Activated naive CD4-positive, alpha-beta T cell treated with anti-CD3 and anti-CD28 coated beads for 36 hours (primary cell): ENCODE measurements at regions of chr7 and their contacts with region 1.

Region 1: DNA sequence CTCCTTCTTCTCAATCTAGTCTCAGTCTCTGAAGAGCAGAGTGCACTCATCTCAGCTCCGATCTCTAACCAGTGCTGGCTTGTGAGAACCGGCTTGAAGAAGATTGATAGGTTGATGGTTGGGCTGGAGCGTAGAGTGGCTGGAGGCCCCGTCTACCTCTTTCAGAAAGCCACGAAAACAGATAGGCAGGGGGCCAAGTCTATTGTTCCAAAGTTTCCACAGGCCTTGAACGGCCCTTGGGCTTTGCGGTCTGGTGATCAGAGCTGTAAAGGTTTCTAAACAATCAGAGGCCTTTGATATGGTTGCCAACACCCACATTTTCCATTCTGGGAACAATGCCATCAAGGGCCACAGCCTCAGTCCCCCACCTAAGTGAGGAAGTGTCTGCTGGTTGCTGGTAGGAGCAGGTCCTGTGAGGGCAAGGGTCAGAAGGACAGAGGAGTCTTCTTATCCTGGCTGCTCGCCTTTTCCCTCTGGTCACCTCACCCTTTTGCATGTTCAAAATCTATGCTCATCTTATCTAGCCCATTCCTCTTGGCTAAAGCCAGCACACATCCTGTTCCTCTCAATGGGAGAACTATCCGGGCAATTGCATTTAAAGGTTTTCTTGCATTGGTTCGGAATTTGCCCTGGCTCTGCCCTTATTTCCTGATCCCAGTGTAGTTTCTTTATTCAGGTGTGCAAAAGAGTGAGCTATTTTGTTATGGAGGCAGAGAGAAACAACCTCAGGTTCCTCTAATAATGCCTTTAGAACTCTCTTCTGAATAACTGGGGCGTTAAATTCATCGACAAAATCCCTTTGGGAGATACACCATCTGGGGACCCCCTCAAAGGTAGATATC is 70.3 kb upstream of the KMT2E start:
- DNase-seq: peak; percentile 82
- H3K4me3 Mint-ChIP-seq: peak overlapping the region; percentile 97
- H3K27ac Mint-ChIP-seq: peak overlapping the region; percentile 100
- H3K4me1 Mint-ChIP-seq: peaks cover 59% of the 10 kb centered on the region
- H3K27me3 Mint-ChIP-seq: no peaks in the 10 kb centered on the region

Region 2: DNA sequence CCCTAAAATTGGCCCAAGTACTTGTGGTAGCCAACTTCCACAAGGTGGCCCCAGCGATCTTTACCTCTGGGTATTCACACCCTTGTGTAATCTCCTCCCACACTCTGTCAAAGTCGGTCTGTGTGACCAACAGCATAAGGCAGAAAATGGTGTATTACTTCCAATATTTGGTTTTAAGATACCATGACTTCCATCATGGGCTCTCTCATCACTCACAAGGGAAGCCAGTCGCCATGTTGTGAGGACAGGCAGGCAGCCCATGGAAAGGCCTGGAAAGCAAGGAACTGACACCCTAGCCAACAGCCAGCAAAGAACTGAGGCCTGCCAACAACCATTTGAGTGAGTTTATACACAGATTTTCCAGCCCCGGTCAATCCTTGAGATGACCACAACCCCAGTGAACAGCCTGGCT is 20.7 kb before region 1 on chr7:
- CTCF ChIA-PET with region 1: interaction called, 7 read pairs
- intact Hi-C with region 1: loop called (anchors 1 kb)
- DNase-seq: peak; percentile 90
- H3K4me3 Mint-ChIP-seq: no peak overlapping the region
- H3K27ac Mint-ChIP-seq: peak overlapping the region; percentile 61
- H3K4me1 Mint-ChIP-seq: peaks cover 4% of the 10 kb centered on the region
- H3K27me3 Mint-ChIP-seq: no peaks in the 10 kb centered on the region

Region 3: GRCh38 chr7:105098863-105099515 is 155.3 kb after region 1 on chr7:
- CTCF ChIA-PET with region 1: no interaction called
- intact Hi-C with region 1: loop called (anchors 1 kb)
- DNase-seq: no peak
- H3K4me3 Mint-ChIP-seq: no peak overlapping the region
- H3K27ac Mint-ChIP-seq: peak overlapping the region; percentile 73
- H3K4me1 Mint-ChIP-seq: peaks cover 59% of the 10 kb centered on the region
- H3K27me3 Mint-ChIP-seq: no peaks in the 10 kb centered on the region

Region 4: GRCh38 chr7:105141068-105141467 is 197.3 kb after region 1 on chr7:
- CTCF ChIA-PET with region 1: no interaction called
- intact Hi-C with region 1: no loop called
- DNase-seq: no peak
- H3K4me3 Mint-ChIP-seq: no peak overlapping the region
- H3K27ac Mint-ChIP-seq: no peak overlapping the region
- H3K4me1 Mint-ChIP-seq: no peaks in the 10 kb centered on the region
- H3K27me3 Mint-ChIP-seq: no peaks in the 10 kb centered on the region

Region 5: GRCh38 chr7:105298439-105298907 is 354.8 kb after region 1 on chr7:
- CTCF ChIA-PET with region 1: no interaction called
- intact Hi-C with region 1: loop called (anchors 2 kb)
- DNase-seq: peak; percentile 55
- H3K4me3 Mint-ChIP-seq: peak overlapping the region; percentile 33
- H3K27ac Mint-ChIP-seq: peak overlapping the region; percentile 44
- H3K4me1 Mint-ChIP-seq: peaks cover 51% of the 10 kb centered on the region
- H3K27me3 Mint-ChIP-seq: no peaks in the 10 kb centered on the region

Region 6: DNA sequence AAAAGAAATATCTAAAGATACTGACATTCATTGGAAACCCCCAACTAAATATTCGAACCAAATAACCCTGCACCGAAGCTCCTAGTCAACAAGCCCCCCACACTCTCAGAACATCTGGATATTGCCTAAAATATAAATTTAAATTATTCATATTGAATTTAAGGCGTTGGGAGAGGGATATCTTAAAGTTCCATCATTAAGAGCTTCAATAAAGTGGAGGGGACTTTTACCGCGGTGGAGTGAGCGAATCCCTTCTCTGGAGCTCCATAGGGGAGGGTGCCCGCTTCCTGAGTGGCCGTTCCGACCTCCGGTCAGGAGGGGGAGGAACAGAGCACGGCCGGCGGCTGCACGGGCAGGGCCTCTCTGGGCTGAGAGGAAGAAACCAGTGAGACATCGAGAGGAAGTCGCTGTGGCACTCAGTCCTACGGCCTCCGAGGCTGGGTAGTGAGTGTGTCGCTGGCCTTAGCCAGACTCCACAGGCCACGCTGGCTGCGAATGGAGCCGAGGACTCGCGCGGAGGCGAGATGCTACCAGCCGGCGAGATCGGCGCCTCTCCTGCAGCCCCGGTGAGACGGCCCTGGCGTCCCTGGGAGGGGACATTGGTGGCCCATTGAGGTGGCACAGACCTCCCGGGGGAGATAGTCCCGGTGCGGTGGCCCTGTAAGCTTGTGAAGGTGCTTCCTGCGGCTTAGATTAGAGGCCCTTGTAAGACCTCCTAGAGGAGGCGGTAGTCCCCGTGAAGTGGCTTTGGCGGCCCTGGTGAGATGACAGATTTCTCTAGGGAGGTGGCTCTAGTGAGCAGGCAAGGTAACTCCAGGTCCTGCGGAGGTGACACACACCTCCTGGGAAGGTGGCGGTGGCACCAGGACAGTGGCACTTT is 588.3 kb after region 1 on chr7 and contains the start of gene RINT1:
- CTCF ChIA-PET with region 1: no interaction called
- intact Hi-C with region 1: loop called (anchors 1 kb)
- DNase-seq: peak; percentile 95
- H3K4me3 Mint-ChIP-seq: peak within 1 kb of the TSS; percentile 83
- H3K27ac Mint-ChIP-seq: peak within 1 kb of the TSS; percentile 85
- H3K4me1 Mint-ChIP-seq: peaks cover 23% of the 10 kb centered on the region
- H3K27me3 Mint-ChIP-seq: no peaks in the 10 kb centered on the region
- total RNA-seq, gene RINT1: 22.1 to 25.2 TPM

Region 7: DNA sequence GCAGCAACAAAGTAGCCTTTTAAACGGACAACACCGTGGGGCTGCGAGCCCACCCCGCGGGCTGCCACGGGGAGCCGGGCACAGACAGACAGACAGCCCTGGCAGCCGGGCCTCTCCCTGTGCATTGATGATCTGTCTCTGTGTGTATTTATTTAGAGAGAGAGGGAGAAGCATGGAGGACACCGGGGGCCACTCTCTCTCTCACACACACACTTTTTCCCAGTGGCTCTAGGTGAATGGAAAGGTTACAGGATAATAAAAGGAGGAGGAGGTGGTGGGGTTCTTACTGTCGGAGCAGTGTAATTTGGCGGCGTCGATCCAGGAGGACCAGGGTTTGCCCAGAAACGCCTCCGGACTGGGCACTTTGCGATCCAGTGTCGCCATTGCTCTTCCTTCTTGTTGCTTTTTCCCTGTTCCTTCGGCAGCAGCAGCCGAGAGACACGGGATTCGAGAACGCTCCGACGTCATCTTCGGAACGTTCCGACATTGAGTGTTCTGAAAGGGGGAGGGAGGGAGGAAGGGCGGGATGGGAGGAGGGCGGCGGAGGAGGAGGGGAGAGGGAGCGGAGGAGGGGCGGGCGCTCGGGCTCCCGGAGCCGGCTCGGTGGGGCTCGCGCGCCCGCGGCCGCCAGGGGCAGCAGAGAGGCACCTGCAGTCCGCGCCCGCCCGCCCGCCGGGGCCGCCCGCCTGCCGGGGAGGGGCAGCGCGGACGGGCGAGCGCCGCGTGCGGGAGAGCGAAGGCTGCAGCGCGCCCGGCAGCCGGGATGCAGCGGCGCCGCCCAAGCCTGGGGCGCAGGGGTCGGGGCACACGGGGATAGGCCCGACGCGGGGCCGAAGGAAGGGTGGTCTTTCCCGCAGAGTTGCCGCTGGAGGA is 932.6 kb after region 1 on chr7 and contains the start of gene ATXN7L1:
- CTCF ChIA-PET with region 1: no interaction called
- intact Hi-C with region 1: loop called (anchors 2 kb)
- DNase-seq: peak; percentile 93
- H3K4me3 Mint-ChIP-seq: peak within 1 kb of the TSS; percentile 91
- H3K27ac Mint-ChIP-seq: peak within 1 kb of the TSS; percentile 82
- H3K4me1 Mint-ChIP-seq: peaks cover 58% of the 10 kb centered on the region
- H3K27me3 Mint-ChIP-seq: no peaks in the 10 kb centered on the region
- total RNA-seq, gene ATXN7L1: 8.8 to 9.2 TPM

Region 8: DNA sequence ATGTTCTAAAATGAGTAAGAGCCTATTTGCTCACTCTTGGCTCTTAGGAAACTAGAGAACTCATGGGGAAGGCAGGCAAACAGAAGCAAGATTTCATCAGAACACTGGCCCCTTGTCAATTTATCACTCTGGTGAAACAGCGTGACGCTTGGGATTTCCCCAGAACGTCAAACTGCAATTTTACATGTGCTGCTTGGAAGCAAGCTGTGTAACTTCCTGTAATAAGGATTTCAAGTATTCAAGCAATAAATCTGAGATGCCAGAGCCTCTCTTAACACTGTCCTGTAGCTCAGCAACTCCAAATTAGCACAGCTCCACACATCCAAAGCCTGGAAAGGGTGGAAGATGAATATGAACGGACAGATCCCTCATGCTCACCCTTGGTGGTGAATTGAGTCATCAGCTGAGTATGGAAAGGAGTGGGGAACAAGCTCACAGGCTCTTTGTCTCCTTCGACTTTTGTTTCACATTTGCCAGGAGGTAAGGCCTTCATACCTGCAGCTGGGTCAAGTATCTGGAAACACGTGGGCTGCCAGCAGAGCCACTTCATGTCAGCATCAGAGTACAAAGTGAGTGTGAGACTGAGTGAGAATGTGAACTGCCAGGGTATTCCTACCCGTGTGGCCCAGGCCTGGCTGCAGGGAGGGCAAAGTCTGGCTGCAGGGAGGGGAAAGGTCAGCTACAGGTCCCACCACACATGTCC is 1481.4 kb after region 1 on chr7:
- CTCF ChIA-PET with region 1: no interaction called
- intact Hi-C with region 1: loop called (anchors 10 kb)
- DNase-seq: peak; percentile 96
- H3K4me3 Mint-ChIP-seq: peak overlapping the region; percentile 80
- H3K27ac Mint-ChIP-seq: peak overlapping the region; percentile 99
- H3K4me1 Mint-ChIP-seq: peaks cover 86% of the 10 kb centered on the region
- H3K27me3 Mint-ChIP-seq: peaks cover 3% of the 10 kb centered on the region